OCI-LY7 (cell line): ENCODE measurements at regions of chr9 and their contacts with region 1.

Region 1: DNA sequence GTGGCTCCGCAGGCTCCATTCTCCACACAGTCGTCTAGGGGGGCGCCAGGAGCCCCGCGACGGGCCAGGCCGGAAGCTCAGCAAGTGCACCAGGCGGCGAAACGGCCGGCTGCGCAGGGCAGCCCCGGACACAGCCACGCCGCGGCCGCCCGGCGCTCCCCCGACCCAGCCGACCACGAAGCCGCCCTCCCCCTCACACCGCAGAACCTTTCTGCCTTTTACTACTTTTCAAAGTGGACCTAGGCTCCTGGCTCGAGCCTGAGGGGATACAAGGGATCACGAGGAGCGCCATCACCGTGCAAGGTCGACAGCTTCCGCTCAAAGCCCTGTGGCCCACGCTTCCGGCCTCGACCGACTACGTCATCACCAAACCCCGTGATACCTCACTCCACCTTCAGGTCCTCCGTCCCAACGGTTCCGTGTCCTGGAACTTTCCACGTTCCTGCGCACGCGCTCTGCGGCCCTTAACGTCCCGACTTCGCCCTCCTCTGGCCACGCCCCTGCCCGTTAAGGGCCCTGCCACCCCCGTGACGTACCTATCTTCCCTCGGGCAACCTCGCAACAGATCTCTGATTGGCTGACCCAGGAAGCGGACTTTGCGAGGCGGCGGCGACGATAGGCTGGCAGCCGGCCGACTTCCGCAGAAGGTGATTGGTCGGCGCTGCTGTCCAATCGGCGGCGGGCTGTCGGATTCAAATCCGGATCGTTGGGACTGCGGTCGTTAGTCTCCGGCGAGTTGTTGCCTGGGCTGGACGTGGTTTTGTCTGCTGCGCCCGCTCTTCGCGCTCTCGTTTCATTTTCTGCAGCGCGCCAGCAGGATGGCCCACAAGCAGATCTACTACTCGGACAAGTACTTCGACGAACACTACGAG is at the start of gene CKS2:
- DNase-seq: peak; percentile 100
- H3K4me3 ChIP-seq: peak within 1 kb of the TSS; percentile 100
- H3K27ac ChIP-seq: peak within 1 kb of the TSS; percentile 92
- H3K4me1 ChIP-seq: peaks cover 44% of the 10 kb centered on the region
- CTCF ChIP-seq: peak; percentile 50; the same call in 1 of the 2 replicates
- total RNA-seq, gene CKS2: 229 and 299 TPM in 2 replicates

Region 2: DNA sequence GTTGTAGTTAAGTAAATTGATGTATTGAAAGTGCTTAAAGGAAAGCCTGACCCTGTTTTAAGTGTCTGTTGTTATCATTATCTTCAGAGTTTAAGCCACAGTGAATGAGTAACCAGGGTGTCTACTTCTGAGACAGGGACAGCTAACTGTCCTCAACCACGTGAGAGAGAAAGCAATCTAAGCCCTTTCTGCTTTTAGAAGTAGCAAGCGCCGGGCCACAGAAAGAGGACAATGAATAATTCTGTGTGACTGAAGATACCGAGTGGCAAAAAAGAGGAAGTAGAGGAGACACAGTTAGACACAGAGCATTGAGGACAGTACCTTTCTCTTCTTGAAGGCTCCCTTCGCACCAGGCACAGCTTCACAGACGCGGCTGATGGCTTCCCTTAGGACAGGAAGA is 233.2 kb before region 1 on chr9:
- CTCF ChIA-PET with region 1: no interaction called
- POLR2A ChIA-PET with region 1: no interaction called
- intact Hi-C with region 1: no loop called
- DNase-seq: peak; percentile 7
- H3K4me3 ChIP-seq: no peak overlapping the region
- H3K27ac ChIP-seq: no peak overlapping the region
- H3K4me1 ChIP-seq: no peaks in the 10 kb centered on the region
- CTCF ChIP-seq: no peak

Region 3: GRCh38 chr9:89743573-89744361 is 433.1 kb after region 1 on chr9:
- CTCF ChIA-PET with region 1: no interaction called
- POLR2A ChIA-PET with region 1: no interaction called
- intact Hi-C with region 1: loop called (anchors 5 kb)
- DNase-seq: peak; percentile 78
- H3K4me3 ChIP-seq: peak overlapping the region; percentile 24
- H3K27ac ChIP-seq: peak overlapping the region; percentile 93
- H3K4me1 ChIP-seq: peaks cover 80% of the 10 kb centered on the region
- CTCF ChIP-seq: no peak